PC-9 (cell line): ENCODE measurements at regions of chr20 and their contacts with region 1.

Region 1: GRCh38 chr20:23435626-23436539 is 3.6 kb upstream of the CSTL1 start:
- DNase-seq: no peak
- H3K4me3 ChIP-seq: no peak overlapping the region
- H3K27ac ChIP-seq: no peak overlapping the region
- H3K4me1 ChIP-seq: no peaks in the 10 kb centered on the region
- H3K27me3 ChIP-seq: no peaks in the 10 kb centered on the region
- CTCF ChIP-seq: no peak

Region 2: DNA sequence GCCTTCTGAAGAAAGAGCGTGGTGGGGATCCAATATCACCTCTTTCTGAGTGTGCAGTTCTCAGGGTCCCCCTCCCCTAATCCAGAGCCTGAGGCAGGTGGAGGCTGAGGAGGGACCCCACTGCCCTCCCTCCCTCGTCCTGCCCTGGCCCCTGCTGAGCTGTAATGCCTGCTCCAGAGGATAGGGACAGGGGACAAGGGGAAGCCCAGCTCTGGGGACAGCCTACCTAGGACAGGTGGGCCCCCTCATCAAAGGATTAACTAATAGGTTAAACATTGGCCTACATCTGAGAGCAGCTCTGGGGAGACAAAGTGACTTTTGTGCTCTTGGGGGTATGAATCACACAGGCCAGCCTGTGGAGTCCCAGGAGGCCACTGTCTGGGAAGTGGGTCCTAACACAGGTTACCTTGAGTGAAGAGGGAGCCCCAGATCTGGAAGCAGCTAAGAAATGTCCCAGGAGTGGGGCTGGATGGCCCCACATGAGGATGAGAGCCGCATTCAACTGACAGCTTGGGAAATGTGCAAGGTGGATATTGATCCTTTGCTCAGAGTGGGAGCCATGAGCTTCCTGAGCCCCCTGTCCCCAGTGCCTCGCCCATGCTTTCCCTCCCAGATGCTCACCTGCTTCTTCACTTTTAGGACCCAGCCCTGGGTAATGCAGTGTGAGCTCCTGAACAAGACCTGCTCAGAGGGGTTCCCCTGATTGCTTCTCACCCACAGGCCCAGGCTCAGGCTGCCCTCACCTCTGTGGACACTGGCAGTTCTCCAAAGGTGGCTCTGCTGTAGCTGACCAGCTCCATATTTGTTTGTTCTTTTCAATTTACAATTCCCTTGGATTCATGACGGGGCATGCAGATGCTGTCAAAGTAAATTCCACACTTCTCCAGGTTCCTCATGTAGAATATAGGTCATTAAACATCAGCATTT is 150.2 kb after region 1 on chr20:
- CTCF ChIA-PET with region 1: no interaction called
- POLR2A ChIA-PET with region 1: interaction called, 10 read pairs
- intact Hi-C with region 1: no loop called
- DNase-seq: no peak
- H3K4me3 ChIP-seq: no peak overlapping the region
- H3K27ac ChIP-seq: no peak overlapping the region
- H3K4me1 ChIP-seq: no peaks in the 10 kb centered on the region
- H3K27me3 ChIP-seq: no peaks in the 10 kb centered on the region
- CTCF ChIP-seq: no peak